ENCODE measurements at regions of chr4 and their contacts with region 1.

Region 1: GRCh38 chr4:145180298-145181090 is at the start of gene OTUD4:
- DNase-seq: peak; percentile 97
- ATAC-seq: peak; percentile 79
- H3K4me3 Mint-ChIP-seq: peak within 1 kb of the TSS; percentile 96
- H3K27ac Mint-ChIP-seq: peak within 1 kb of the TSS; percentile 97
- H3K4me1 Mint-ChIP-seq: peaks cover 15% of the 10 kb centered on the region
- H3K27me3 Mint-ChIP-seq: peaks cover 2% of the 10 kb centered on the region
- total RNA-seq, gene OTUD4: 43.4 to 43.9 TPM

Region 2: GRCh38 chr4:145097821-145098674 is 82.4 kb before region 1 on chr4 and contains the starts of genes ABCE1 and ANAPC10:
- POLR2A ChIA-PET with region 1: interaction called, 42 read pairs
- DNase-seq: peak; percentile 92
- ATAC-seq: peak; percentile 92
- H3K4me3 Mint-ChIP-seq: peak within 1 kb of the TSS; percentile 97
- H3K27ac Mint-ChIP-seq: peak within 1 kb of the TSS; percentile 98
- H3K4me1 Mint-ChIP-seq: peaks cover 11% of the 10 kb centered on the region
- H3K27me3 Mint-ChIP-seq: no peaks in the 10 kb centered on the region
- total RNA-seq, gene ABCE1: 57.5 to 59.3 TPM
- total RNA-seq, gene ANAPC10: 20.2 to 23.2 TPM

Region 3: DNA sequence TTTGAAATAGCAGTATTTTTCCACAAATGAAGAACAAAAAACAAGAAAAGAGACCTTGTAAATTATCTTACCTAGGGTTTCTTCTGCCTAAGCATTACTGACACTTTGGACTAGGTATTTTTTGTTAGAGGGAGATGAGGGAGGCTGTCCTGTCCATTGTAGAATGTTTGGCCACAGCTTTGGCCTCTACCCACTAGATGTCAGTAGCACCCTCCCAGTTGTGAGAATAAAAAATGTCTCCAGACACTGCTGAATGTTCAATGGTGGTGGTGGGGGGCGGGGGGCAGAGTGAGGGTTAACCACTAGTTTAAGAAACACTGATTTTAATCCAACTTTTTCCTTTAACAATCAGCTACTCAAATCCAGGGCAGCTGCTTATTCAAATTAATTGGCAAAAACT is 25.9 kb before region 1 on chr4:
- POLR2A ChIA-PET with region 1: no interaction called
- DNase-seq: no peak
- ATAC-seq: no peak
- H3K4me3 Mint-ChIP-seq: no peak overlapping the region
- H3K27ac Mint-ChIP-seq: no peak overlapping the region
- H3K4me1 Mint-ChIP-seq: peaks cover 15% of the 10 kb centered on the region
- H3K27me3 Mint-ChIP-seq: no peaks in the 10 kb centered on the region

Region 4: GRCh38 chr4:145618932-145619638 is 438.6 kb after region 1 on chr4 and contains the start of gene MMAA:
- POLR2A ChIA-PET with region 1: interaction called, 12 read pairs
- DNase-seq: peak; percentile 96
- ATAC-seq: peak; percentile 97
- H3K4me3 Mint-ChIP-seq: peak within 1 kb of the TSS; percentile 96
- H3K27ac Mint-ChIP-seq: peak within 1 kb of the TSS; percentile 99
- H3K4me1 Mint-ChIP-seq: peaks cover 20% of the 10 kb centered on the region
- H3K27me3 Mint-ChIP-seq: peaks cover 2% of the 10 kb centered on the region
- total RNA-seq, gene MMAA: 11.0 to 12.4 TPM